ENCODE measurements at regions of chr9 and their contacts with region 1.

Region 1: GRCh38 chr9:128275996-128276573 is at the starts of genes GOLGA2 and SWI5:
- DNase-seq: peak; percentile 100
- H3K4me3 ChIP-seq: peak within 1 kb of the TSS; percentile 75 to 93 (median 78)
- H3K27ac ChIP-seq: peak within 1 kb of the TSS; percentile 88 to 90 (median 90)
- H3K4me1 ChIP-seq: peaks cover 0 to 36% (median 24%) of the 10 kb centered on the region in 4 donors
- H3K27me3 ChIP-seq: no peaks in the 10 kb centered on the region
- CTCF ChIP-seq: no peak
- EP300 ChIP-seq: peak in 1 of 4 donors; percentile 30
- POLR2A ChIP-seq: peak; percentile 89 to 97
- total RNA-seq, gene GOLGA2: 76.0 to 104 (median 86.5) TPM
- total RNA-seq, gene SWI5: 18.0 to 35.7 (median 23.4) TPM

Region 2: DNA sequence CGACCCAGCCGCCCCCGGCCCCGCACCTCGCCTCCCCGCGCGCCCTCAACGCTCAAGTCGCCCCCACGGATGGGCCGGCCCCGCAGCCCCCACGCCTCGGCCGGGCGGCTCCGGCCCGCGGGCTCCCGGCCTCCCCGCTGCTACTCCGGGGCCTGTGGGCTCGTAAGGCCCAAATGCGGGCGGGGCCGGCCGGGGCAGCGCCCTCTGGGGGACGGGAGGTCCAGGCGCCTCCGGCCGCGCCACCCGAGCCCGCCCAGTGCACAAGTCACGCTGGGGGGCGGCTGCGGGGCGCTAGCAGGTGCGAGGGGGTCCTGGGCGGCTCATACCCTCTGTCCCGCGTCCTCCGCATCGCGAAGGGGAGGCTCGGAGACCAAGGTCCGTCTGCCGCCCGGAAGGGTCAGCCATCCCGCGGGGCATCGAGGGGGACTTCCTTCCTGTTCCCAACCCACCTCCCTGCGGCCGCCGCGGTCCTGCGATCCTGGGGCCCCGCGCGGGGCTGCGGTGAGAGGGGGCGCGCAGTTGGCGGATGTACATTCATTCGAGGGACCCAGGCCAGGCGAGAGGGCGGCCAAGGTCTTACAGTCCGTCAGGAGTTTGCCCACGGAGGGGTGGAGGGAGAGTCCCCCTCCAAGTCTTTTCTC is 84.6 kb before region 1 on chr9 and contains the start of gene CIZ1:
- intact Hi-C with region 1: loop called (anchors 5 kb)
- DNase-seq: peak; percentile 90
- H3K4me3 ChIP-seq: peak within 1 kb of the TSS; percentile 66 to 96 (median 90)
- H3K27ac ChIP-seq: peak within 1 kb of the TSS; percentile 87 to 96 (median 93)
- H3K4me1 ChIP-seq: peaks cover 0 to 36% (median 22%) of the 10 kb centered on the region in 4 donors
- H3K27me3 ChIP-seq: no peaks in the 10 kb centered on the region
- CTCF ChIP-seq: peak; percentile 10 to 90 (median 46)
- EP300 ChIP-seq: no peak
- POLR2A ChIP-seq: peak in 1 of 2 donors; percentile 29
- total RNA-seq, gene CIZ1: 60.2 to 116 (median 68.5) TPM

Region 3: GRCh38 chr9:128231638-128232527 is 44.2 kb before region 1 on chr9:
- intact Hi-C with region 1: no loop called
- DNase-seq: peak; percentile 77
- H3K4me3 ChIP-seq: no peak overlapping the region
- H3K27ac ChIP-seq: peak overlapping the region in 1 of 4 donors; percentile 27
- H3K4me1 ChIP-seq: no peaks in the 10 kb centered on the region
- H3K27me3 ChIP-seq: no peaks in the 10 kb centered on the region
- CTCF ChIP-seq: no peak
- EP300 ChIP-seq: no peak
- POLR2A ChIP-seq: no peak

Region 4: DNA sequence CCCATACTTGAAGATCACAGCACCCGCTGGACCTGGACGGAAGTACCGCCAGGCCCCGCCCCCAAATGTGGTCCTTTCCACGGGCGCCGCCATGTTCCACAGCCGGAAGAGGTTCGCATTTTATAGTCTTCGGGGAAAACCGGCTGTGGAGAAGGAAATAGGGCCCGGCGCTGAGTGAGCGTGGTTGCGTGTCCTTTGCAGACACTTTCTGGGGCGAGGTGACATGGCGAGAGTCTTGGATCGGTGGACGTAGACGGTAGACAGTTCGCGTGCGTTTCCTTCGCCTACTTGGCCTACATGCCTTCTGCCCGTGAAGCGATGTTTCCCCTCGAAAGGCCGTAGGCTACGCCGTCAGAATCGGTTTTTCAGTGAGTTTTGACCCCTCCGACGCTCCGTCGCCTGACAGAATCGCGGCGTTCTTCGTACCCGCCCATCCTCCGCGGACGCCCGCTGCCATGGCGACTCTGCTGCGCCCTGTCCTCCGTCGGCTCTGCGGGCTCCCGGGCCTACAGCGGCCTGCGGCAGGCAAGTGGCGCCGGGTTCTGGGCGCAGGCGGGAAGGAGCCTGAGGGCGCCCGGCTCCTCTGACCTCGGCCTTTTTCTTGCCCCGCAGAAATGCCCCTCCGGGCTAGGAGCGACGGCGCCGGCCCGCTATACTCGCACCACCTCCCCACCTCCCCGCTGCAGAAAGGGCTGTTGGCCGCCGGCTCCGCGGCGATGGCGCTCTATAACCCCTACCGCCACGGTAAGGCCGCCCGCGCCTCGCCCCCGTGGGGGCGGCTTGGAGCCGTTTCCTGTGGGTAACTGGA is 46.5 kb after region 1 on chr9 and contains the starts of genes COQ4 and TRUB2:
- intact Hi-C with region 1: loop called (anchors 5 kb)
- DNase-seq: peak; percentile 97
- H3K4me3 ChIP-seq: peak within 1 kb of the TSS; percentile 63 to 97 (median 86)
- H3K27ac ChIP-seq: peak within 1 kb of the TSS; percentile 85 to 90 (median 88)
- H3K4me1 ChIP-seq: peaks cover 0 to 27% (median 25%) of the 10 kb centered on the region in 4 donors
- H3K27me3 ChIP-seq: no peaks in the 10 kb centered on the region
- CTCF ChIP-seq: no peak
- EP300 ChIP-seq: no peak
- POLR2A ChIP-seq: no peak
- total RNA-seq, gene COQ4: 26.4 to 60.7 (median 29.7) TPM
- total RNA-seq, gene TRUB2: 7.6 to 14.1 (median 9.1) TPM

Region 5: GRCh38 chr9:129362287-129363000 is 1086.4 kb after region 1 on chr9:
- intact Hi-C with region 1: no loop called
- DNase-seq: no peak
- H3K4me3 ChIP-seq: no peak overlapping the region
- H3K27ac ChIP-seq: no peak overlapping the region
- H3K4me1 ChIP-seq: no peaks in the 10 kb centered on the region
- H3K27me3 ChIP-seq: no peaks in the 10 kb centered on the region
- CTCF ChIP-seq: no peak
- EP300 ChIP-seq: no peak
- POLR2A ChIP-seq: no peak

Measured in sigmoid colon (tissue), 7 donors.